ENCODE measurements at regions of chr1 and their contacts with region 1.

Region 1: DNA sequence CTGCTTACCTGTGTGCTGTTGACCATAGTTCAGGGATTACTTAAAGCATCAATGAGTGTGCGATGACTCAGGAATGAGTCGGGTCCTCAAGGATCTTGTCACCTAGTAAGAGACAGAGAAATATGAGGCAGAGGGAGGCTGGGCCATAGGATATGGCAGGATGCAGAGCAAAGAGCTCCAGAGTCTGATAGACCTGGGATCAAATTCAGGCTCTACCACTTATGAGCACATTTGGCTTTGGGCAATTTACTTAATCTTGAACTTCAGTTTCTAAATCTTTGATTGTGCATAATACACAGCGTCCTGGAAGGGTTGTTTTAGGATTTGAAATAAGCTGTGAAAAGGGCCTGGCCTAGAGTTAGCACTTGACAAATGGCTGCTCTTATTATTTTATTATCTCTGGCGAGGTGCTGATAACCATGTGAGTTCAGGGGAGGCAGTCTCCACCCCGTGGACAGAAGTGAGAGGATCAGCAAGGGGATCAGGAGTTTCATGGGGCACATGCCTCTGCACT is 94.5 kb downstream of the ROR1 start:
- DNase-seq: no peak
- H3K4me3 ChIP-seq: no peak overlapping the region
- H3K27ac ChIP-seq: no peak overlapping the region
- H3K4me1 ChIP-seq: peaks cover 0 to 3% of the 10 kb centered on the region in 2 donors
- H3K27me3 ChIP-seq: no peaks in the 10 kb centered on the region
- CTCF ChIP-seq: no peak
- POLR2A ChIP-seq: no peak

Region 2: DNA sequence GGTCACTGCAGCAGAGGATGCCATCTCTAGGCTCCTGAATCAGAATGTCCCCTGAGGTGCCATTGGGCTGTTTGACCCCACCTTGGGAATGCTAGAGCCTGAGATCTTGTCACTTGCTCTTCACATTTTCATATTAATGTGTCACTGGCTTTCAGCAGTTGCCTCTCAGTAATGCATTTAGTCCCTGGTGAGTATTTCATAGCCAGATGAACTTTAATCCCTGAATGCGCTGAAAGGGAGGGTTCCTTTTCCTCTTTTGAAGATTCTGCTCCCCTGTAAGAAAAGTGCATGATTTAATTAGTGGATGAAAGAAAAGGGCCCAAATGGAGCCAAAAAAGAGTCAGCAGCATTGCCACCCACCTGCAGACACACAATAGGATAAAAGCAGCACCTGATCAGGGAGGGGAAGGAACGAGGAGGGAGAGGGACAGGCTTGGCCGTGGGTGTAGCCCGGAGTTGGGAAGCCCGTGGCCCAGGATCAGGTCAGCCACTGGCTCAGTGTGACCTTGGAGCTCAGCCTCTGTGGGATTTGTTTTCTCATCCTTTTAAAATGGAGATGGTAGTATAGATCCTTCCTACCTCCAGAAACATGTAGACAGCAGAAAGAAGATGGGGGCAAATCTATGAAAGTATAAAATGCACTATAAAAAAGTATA is 63.4 kb before region 1 on chr1:
- intact Hi-C with region 1: loop called (anchors 2 kb)
- DNase-seq: no peak
- H3K4me3 ChIP-seq: no peak overlapping the region
- H3K27ac ChIP-seq: no peak overlapping the region
- H3K4me1 ChIP-seq: no peaks in the 10 kb centered on the region
- H3K27me3 ChIP-seq: no peaks in the 10 kb centered on the region
- CTCF ChIP-seq: no peak
- POLR2A ChIP-seq: no peak

Region 3: GRCh38 chr1:63917571-63918417 is 49.5 kb after region 1 on chr1:
- intact Hi-C with region 1: no loop called
- DNase-seq: no peak
- H3K4me3 ChIP-seq: no peak overlapping the region
- H3K27ac ChIP-seq: no peak overlapping the region
- H3K4me1 ChIP-seq: no peaks in the 10 kb centered on the region
- H3K27me3 ChIP-seq: no peaks in the 10 kb centered on the region
- CTCF ChIP-seq: no peak
- POLR2A ChIP-seq: no peak

Region 4: GRCh38 chr1:64654519-64655341 is 786.4 kb after region 1 on chr1:
- intact Hi-C with region 1: loop called (anchors 10 kb)
- DNase-seq: no peak
- H3K4me3 ChIP-seq: no peak overlapping the region
- H3K27ac ChIP-seq: no peak overlapping the region
- H3K4me1 ChIP-seq: no peaks in the 10 kb centered on the region
- H3K27me3 ChIP-seq: no peaks in the 10 kb centered on the region
- CTCF ChIP-seq: peak in 2 of 3 donors; percentile 16 to 23
- POLR2A ChIP-seq: no peak

Measured in breast epithelium (tissue), 4 donors.